ENCODE measurements at regions of chr20 and their contacts with region 1.

Region 1: GRCh38 chr20:46174469-46175128 is 56.5 kb downstream of the CD40 start:
- DNase-seq: peak; percentile 69
- ATAC-seq: peak; percentile 97
- H3K4me3 Mint-ChIP-seq: no peak overlapping the region
- H3K27ac Mint-ChIP-seq: no peak overlapping the region
- H3K4me1 Mint-ChIP-seq: no peaks in the 10 kb centered on the region
- H3K27me3 Mint-ChIP-seq: peaks cover 49% of the 10 kb centered on the region
- CTCF ChIP-seq: no peak

Region 2: DNA sequence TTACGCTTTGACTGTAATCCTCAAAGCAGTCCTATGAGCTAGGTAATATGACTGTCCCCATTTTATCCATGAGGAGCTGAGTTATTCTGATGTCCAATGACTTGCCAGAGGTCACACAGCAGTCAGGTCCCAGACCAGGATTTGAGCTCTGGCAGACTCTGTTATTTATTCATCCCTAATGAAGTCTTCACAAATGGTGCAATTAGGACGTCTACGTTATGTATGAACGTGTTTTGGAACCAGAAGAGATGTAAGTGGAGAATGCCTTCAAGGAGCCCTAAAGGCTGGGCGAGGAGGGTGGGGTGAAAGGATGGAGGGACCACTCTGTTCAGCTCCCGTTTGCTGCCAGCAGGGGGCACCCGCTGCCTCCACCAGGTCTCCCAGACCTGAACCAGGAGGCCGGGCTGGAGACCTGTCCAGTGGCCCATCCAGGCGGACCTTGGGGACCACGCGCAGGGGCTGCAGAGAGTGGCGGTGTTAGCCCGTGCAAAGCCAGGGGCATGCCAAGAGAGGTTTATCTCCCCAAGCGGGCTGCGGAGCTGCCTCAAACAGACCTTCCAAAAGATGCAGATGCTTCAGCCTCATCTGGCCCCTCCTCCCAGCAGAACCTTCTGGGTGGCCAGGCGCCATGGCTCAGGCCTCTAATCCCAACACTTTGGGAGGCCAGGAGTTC is 187.4 kb before region 1 on chr20:
- CTCF ChIA-PET with region 1: interaction called, 8 read pairs
- POLR2A ChIA-PET with region 1: no interaction called
- intact Hi-C with region 1: loop called (anchors 1 kb)
- DNase-seq: peak; percentile 70
- ATAC-seq: peak; percentile 97
- H3K4me3 Mint-ChIP-seq: no peak overlapping the region
- H3K27ac Mint-ChIP-seq: no peak overlapping the region
- H3K4me1 Mint-ChIP-seq: peaks cover 5% of the 10 kb centered on the region
- H3K27me3 Mint-ChIP-seq: peaks cover 13% of the 10 kb centered on the region
- CTCF ChIP-seq: no peak

Region 3: DNA sequence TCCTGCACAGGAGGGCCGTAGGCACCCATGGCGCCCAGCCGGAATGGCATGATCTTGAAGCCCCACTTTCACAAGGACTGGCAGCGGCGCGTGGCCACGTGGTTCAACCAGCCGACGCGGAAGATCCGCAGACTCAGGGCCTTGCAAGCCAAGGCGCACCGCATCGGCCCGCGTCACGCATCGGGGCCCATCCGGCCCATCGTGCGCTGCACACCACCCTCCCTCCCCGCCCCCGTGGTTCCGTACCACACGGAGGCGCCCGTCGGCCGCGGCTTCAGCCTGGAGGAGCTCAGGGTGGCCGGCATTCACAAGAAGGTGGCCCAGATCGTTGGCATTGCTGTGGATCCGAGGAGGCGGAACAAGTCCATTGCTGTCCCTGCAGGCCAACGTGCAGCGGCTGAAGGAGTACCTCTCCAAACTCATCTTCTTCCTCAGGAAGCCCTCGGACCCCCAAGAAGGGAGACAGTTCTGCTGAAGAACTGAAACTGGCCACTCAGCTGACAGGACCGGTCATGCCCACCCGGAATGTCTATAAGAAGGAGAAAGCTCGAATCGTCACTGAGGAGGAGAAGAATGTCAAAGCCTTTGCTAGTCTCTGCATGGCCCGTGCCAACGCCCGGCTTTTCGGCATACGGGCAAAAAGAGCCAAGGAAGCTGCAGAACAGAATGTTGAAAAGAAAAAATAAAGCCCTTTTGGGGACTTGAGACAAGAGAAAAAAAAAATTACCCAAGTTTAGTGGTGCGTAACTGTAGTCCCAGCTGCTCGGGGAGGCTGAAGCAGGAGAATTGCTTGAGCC is 74.9 kb before region 1 on chr20:
- CTCF ChIA-PET with region 1: interaction called, 16 read pairs
- POLR2A ChIA-PET with region 1: interaction called, 8 read pairs
- intact Hi-C with region 1: loop called (anchors 1 kb)
- DNase-seq: peak; percentile 62
- ATAC-seq: peak; percentile 100
- H3K4me3 Mint-ChIP-seq: peak overlapping the region; percentile 74
- H3K27ac Mint-ChIP-seq: peak overlapping the region; percentile 50
- H3K4me1 Mint-ChIP-seq: peaks cover 16% of the 10 kb centered on the region
- H3K27me3 Mint-ChIP-seq: peaks cover 1% of the 10 kb centered on the region
- CTCF ChIP-seq: no peak

Region 4: GRCh38 chr20:46215913-46216707 is 41.5 kb after region 1 on chr20:
- CTCF ChIA-PET with region 1: no interaction called
- POLR2A ChIA-PET with region 1: no interaction called
- intact Hi-C with region 1: no loop called
- DNase-seq: no peak
- ATAC-seq: no peak
- H3K4me3 Mint-ChIP-seq: no peak overlapping the region
- H3K27ac Mint-ChIP-seq: no peak overlapping the region
- H3K4me1 Mint-ChIP-seq: no peaks in the 10 kb centered on the region
- H3K27me3 Mint-ChIP-seq: peaks cover 20% of the 10 kb centered on the region
- CTCF ChIP-seq: no peak

Measured in activated B cell treated with CpG ODN at 0.5 μM for 24 hours (primary cell).